Sciatic nerve (tissue), 2 donors: ENCODE measurements at regions of chr4 and their contacts with region 1.

Region 1: DNA sequence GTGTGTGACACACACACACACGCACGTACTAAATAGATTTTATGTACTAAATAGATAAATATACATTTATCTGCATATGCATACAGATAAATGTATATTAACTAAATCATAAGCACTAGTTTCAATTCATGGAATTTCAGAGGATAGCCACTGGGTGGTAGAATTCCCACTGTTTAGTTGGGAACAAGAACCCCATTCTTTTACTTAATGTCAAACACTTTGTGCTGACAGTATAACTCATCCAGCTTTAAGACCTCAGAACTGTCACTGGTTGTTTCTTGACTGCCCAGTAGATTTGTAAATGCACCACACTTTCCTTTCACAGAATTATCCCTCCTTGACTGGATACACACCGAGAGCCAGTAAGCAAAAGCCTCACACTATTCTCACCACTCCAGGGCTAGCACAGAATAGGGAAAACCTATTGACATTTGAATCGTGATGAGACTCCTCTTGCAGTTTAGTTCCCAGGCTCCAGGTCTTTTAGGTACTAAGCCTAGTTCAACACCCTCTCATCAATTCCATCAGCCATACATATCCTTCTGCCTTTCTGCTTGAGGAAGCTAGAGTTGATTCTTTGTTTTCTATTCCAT is 32.4 kb downstream of the PPARGC1A start:
- DNase-seq: no peak
- ATAC-seq: peak; percentile 55

Region 2: DNA sequence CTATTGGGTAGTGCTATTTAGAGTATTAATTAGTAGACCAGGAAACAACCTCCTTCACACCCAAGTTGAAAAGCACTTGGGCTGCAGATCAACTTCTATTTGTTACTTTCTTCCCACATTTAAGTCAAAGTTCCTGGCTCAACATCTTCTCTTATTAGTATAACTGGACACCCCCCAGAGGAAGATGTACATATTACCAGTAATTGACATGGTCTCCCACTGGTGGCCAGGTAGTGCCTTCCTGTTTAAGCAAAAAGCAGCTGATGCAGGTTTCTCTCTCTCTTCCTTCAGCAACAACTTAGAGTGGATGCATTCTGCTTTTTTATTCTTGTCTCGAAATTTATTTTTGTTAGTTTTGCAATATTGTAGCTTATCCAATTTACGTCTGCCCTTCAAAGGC is 726.6 kb before region 1 on chr4:
- intact Hi-C with region 1: no loop called
- DNase-seq: no peak
- ATAC-seq: no peak

Region 3: GRCh38 chr4:23602720-23603119 is 254.7 kb before region 1 on chr4:
- intact Hi-C with region 1: loop called (anchors 5 kb)
- DNase-seq: no peak
- ATAC-seq: no peak

Region 4: DNA sequence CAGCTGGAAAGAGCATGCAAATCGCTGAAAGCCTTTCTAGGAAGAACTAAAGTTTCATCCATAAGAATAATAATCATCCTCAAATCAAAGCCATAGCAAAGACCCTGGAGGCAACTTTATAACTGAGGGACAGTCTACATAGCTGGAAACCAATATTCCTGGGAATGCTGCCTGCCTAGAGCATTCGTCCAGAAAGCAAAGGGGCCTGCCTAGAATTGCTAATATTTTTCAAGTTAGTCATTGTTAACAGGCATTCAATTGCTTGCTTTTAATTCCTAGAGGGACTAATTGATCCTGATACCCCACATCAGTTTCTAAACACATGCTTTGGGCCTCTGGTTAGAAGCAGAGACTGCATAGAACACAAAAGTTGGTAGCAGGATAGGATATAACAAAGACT is 36.6 kb after region 1 on chr4:
- intact Hi-C with region 1: loop called (anchors 2 kb)
- DNase-seq: no peak
- ATAC-seq: no peak

Region 5: DNA sequence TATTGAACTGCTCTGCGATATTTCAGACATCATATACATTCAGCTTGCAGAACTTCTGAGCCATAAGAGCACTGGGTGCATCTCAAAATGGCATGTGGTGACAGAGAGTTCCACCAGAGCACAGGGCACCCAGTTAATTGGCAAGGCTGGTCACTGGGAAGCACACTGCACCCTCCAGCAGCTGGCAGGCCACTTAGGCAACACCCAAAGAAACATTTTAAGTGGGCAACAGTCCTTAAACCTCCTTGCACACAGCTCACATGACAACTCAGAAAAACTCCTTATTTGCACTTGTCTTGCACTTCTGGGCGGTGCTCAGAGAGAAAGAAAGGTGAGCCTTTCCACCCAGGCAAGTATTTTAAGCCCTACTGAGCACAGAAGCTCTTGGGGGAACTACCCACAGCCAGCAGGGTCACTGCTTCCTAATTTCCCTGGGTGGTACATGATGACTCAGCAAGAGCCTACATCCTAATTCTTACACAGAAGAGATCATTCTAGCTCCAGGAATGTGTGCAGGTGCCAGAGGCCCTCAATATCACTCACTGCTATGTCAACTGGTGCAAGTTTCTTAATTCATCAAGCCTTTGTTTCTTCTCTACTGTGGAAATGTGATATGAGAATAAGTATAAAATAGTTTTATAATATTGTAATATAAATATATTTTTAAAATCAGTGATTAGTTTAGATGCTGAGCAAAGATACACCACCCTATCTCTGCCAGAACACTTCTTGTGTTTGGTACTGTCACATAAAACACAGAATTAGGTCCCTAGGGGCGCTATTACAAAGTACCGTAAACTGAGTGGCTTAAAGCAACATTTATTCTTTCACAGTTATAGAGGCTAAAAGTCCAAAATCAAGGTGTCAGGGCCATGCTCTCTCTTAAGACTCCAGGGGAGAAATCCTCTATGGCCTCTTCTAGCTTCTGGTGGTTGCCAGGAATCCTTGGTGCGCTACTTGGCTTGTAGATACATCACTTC is 187.4 kb after region 1 on chr4:
- intact Hi-C with region 1: no loop called
- DNase-seq: no peak
- ATAC-seq: no peak

Region 6: DNA sequence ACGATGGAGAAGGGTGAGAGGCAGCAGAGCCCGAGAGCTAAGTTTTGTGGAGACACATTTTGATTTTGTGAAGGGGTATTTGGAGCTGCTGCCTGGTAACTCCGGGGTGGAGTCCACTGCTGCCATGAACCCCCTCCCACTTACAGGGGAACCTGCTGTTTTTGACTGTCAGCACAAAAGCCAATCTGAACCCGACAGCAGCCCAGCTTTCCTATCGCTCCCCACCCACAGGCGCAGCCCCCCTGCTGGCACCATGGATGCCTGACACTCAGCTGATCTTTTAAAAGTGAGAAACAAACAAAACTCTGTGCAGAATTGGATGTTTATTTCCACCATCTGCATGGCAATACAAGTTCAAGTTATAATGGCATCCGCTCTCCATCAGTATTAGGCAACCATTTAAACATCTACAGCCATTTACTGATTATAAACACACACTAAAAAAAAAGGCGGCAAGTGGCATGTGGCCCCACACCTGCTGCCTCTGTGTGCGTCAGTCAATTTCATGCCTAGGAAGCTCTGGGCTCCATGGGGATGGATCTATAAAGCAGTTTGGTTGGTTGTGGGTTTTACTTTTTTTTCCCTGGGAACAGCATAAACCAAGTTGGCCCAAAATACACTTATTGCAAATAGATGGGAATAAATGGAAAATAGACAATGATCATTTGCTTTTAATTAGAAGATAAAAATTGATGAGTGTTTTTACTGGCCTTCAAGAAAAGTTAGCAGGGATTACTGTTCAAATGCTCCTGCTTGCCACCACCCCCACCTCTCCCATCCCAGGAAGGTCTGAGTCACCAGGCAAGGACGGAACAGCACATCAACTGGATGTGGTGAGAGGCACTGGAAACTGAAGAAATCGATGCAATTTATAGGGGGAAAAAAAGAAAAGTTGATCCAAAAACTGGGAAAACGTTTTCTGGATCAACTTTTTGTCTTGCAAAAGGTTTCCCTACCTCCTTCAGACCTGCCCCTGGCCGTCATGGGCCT is 1256.7 kb after region 1 on chr4:
- intact Hi-C with region 1: no loop called
- DNase-seq: no peak
- ATAC-seq: no peak